ENCODE measurements at regions of chr17 and their contacts with region 1.

Region 1: DNA sequence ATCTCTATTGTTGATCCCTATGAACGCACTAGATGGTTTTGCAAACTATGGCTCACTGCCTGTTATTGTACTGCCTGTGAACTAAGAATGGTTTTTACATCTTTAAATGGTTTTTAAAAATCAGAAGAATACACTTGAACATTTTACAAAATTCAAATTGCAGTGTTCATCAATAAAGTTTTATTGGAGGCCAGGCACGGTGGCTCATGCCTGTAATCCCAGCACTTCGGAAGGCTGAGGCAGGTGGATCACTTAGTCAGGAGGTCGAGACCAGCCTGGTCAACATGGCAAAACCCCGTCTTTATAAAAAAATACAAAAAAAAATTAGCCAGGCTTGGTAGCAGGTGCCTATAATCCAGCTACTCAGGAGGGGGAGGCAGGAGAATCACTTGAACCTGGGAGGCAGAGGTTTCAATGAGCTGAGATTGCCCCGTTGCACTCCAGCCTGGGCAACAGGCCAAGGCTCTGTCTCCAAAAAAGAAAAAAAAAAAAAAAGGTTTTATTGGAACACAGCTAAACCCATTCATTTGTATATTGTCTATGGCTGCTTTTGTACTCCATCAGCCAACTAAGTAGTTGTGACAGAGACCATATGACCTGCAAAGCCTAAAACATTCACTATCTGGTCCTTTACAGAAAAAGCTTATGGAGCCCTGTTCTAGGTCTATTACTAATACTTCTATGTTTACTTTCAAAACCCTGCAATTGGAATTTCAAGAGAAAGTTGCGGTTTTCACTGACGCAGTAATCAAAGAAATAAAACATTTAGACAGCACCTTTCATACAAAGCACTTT is 18.9 kb downstream of the IKZF3 start:
- DNase-seq: peak in 1 of 9 experiments; percentile 30
- ATAC-seq: no peak
- H3K4me3 ChIP-seq: no peak overlapping the region
- H3K4me3 Mint-ChIP-seq: no peak overlapping the region
- H3K27ac ChIP-seq: no peak overlapping the region
- H3K27ac Mint-ChIP-seq: peak overlapping the region; percentile 89
- H3K4me1 ChIP-seq: peaks cover 81% of the 10 kb centered on the region
- H3K4me1 Mint-ChIP-seq: peaks cover 76% of the 10 kb centered on the region
- H3K27me3 ChIP-seq: no peaks in the 10 kb centered on the region
- H3K27me3 Mint-ChIP-seq: no peaks in the 10 kb centered on the region
- CTCF ChIP-seq: no peak

Region 2: GRCh38 chr17:39799395-39799794 is 45.9 kb before region 1 on chr17:
- CTCF ChIA-PET with region 1: no interaction called
- POLR2A ChIA-PET with region 1: no interaction called
- intact Hi-C with region 1: no loop called
- DNase-seq: no peak
- ATAC-seq: no peak
- H3K4me3 ChIP-seq: no peak overlapping the region
- H3K4me3 Mint-ChIP-seq: no peak overlapping the region
- H3K27ac ChIP-seq: peak overlapping the region in 1 of 2 experiments; percentile 52
- H3K27ac Mint-ChIP-seq: peak overlapping the region; percentile 76
- H3K4me1 ChIP-seq: peaks cover 57% of the 10 kb centered on the region
- H3K4me1 Mint-ChIP-seq: peaks cover 65% of the 10 kb centered on the region
- H3K27me3 ChIP-seq: no peaks in the 10 kb centered on the region
- H3K27me3 Mint-ChIP-seq: no peaks in the 10 kb centered on the region
- CTCF ChIP-seq: no peak

Region 3: GRCh38 chr17:39835038-39835786 is 10.0 kb before region 1 on chr17:
- CTCF ChIA-PET with region 1: interaction called, 10 read pairs
- POLR2A ChIA-PET with region 1: interaction called, 4 read pairs
- intact Hi-C with region 1: no loop called
- DNase-seq: no peak
- ATAC-seq: no peak
- H3K4me3 ChIP-seq: no peak overlapping the region
- H3K4me3 Mint-ChIP-seq: no peak overlapping the region
- H3K27ac ChIP-seq: peak overlapping the region in 1 of 2 experiments; percentile 21
- H3K27ac Mint-ChIP-seq: peak overlapping the region; percentile 66
- H3K4me1 ChIP-seq: peaks cover 9% of the 10 kb centered on the region
- H3K4me1 Mint-ChIP-seq: peaks cover 43% of the 10 kb centered on the region
- H3K27me3 ChIP-seq: no peaks in the 10 kb centered on the region
- H3K27me3 Mint-ChIP-seq: no peaks in the 10 kb centered on the region
- CTCF ChIP-seq: no peak

Region 4: GRCh38 chr17:39863918-39864746 is 18.9 kb after region 1 on chr17 and contains the start of gene IKZF3:
- CTCF ChIA-PET with region 1: interaction called, 3 read pairs
- POLR2A ChIA-PET with region 1: interaction called, 3 read pairs
- intact Hi-C with region 1: loop called (anchors 2 kb)
- DNase-seq: peak; percentile 59 to 96 (median 78)
- ATAC-seq: peak; percentile 67
- H3K4me3 ChIP-seq: peak within 1 kb of the TSS; percentile 65 to 74
- H3K4me3 Mint-ChIP-seq: peak within 1 kb of the TSS; percentile 89
- H3K27ac ChIP-seq: peak within 1 kb of the TSS; percentile 92 to 94
- H3K27ac Mint-ChIP-seq: peak within 1 kb of the TSS; percentile 98
- H3K4me1 ChIP-seq: peaks cover 56% of the 10 kb centered on the region
- H3K4me1 Mint-ChIP-seq: peaks cover 61% of the 10 kb centered on the region
- H3K27me3 ChIP-seq: no peaks in the 10 kb centered on the region
- H3K27me3 Mint-ChIP-seq: no peaks in the 10 kb centered on the region
- CTCF ChIP-seq: peak; percentile 49
- total RNA-seq, gene IKZF3: 57.3 to 59.8 TPM

Region 5: DNA sequence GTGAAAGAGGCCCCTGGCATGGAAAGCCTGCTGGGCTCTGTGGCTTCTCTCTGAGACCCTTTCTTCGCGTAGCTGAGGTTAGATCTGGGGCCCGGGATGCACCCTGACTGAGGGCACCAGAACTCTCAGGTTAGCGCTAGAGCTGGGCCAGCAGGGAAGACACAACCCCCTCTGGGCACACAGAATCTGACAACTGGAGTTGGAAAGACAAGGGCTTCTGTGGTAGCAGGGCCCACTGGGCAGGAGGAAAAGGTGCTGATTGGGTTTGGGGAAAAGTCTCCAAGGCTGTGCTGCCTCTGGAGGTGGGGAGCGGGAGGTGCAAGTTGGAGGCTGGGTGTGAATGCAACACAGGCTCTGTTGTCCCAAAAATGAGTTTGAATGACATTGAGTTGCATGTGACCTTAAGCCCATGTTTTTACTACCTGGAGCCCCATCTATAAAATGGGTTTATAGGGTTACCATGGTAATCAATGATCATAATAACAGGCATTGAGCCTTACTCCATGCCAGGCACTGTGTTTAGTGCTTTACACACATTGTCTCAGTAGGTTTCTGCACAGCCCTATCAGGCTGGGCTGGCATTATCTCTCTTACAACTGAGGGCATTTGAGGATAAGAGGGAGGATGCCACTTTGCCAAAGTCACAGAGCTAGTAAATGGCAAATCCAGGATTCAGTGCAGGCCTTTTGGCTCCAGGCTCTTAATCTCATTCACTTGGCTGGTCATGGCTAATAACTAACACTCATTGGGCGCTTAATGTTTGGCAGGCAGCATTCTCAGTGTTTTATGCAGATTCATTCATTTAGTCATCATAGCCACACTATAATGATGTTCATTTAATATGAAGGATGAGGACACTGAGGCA is 588.5 kb after region 1 on chr17:
- CTCF ChIA-PET with region 1: no interaction called
- POLR2A ChIA-PET with region 1: no interaction called
- intact Hi-C with region 1: no loop called
- DNase-seq: peak in 2 of 9 experiments; percentile 19 to 31
- ATAC-seq: no peak
- H3K4me3 ChIP-seq: no peak overlapping the region
- H3K4me3 Mint-ChIP-seq: no peak overlapping the region
- H3K27ac ChIP-seq: no peak overlapping the region
- H3K27ac Mint-ChIP-seq: no peak overlapping the region
- H3K4me1 ChIP-seq: no peaks in the 10 kb centered on the region
- H3K4me1 Mint-ChIP-seq: peaks cover 2% of the 10 kb centered on the region
- H3K27me3 ChIP-seq: no peaks in the 10 kb centered on the region
- H3K27me3 Mint-ChIP-seq: no peaks in the 10 kb centered on the region
- CTCF ChIP-seq: peak; percentile 36

Measured in CD8-positive, alpha-beta T cell (primary cell).